ENCODE measurements at regions of chr3 and their contacts with region 1.

Region 1: GRCh38 chr3:52518720-52519444 is 14.8 kb downstream of the NT5DC2 start:
- DNase-seq: peak in 1 of 2 experiments; percentile 84
- H3K4me3 ChIP-seq: peak overlapping the region; percentile 31 to 60 (median 34)
- H3K27ac ChIP-seq: no peak overlapping the region
- H3K4me1 ChIP-seq: peaks cover 0 to 6% (median 4%) of the 10 kb centered on the region in 4 experiments; a peak in 5 of 7 replicates
- H3K27me3 ChIP-seq: peaks cover 0 to 11% (median 4%) of the 10 kb centered on the region in 4 experiments; a peak in 5 of 7 replicates
- CTCF ChIP-seq: no peak
- EP300 ChIP-seq: no peak
- POLR2A ChIP-seq: no peak
- RAD21 ChIP-seq: no peak

Region 2: GRCh38 chr3:52393131-52393807 is 125.6 kb before region 1 on chr3:
- CTCF ChIA-PET with region 1: no interaction called
- POLR2A ChIA-PET with region 1: no interaction called
- DNase-seq: no peak
- H3K4me3 ChIP-seq: no peak overlapping the region
- H3K27ac ChIP-seq: no peak overlapping the region
- H3K4me1 ChIP-seq: no peaks in the 10 kb centered on the region
- H3K27me3 ChIP-seq: no peaks in the 10 kb centered on the region
- CTCF ChIP-seq: no peak
- EP300 ChIP-seq: no peak
- POLR2A ChIP-seq: no peak
- RAD21 ChIP-seq: no peak

Region 3: DNA sequence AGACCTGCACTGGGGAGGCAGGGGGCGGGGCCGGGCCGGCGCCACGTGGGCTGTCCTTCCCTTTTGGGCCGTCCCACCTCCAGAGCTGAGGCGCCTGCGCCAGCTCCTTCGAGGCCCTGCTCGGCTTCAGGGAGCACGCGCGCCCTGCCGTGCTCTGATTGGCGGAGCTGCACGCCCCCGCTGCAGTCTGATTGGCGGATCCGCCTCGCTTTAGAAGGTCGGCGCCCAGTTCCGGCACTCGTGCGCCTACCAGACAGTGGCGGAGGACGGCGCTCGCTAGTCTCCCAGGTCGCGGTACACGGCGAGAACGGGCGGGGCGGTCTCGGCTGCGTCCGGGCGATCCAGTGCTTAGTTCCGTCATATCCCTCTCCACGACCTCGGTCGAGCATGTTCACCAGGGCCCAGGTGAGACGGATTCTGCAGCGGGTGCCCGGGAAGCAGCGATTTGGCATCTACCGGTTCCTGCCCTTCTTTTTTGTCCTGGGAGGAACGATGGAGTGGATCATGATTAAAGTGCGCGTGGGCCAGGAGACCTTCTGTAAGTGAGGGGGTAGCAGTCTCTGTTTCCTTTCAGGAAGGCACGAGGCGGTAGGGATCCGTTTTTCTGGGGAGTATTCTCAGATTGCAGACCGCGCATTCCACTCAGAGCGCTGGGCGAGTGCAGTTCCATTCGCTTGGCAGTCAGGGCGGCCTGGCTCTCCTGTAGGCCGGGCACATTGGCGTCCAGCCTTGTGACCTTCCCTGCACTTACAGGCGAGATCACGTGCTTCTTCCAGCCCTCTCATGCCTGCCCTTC is 17.7 kb after region 1 on chr3 and contains the start of gene UQCC5:
- CTCF ChIA-PET with region 1: interaction called, 4 read pairs
- POLR2A ChIA-PET with region 1: interaction called, 25 read pairs
- DNase-seq: peak; percentile 94 to 96
- H3K4me3 ChIP-seq: peak within 1 kb of the TSS; percentile 81 to 91 (median 88)
- H3K27ac ChIP-seq: peak within 1 kb of the TSS; percentile 77
- H3K4me1 ChIP-seq: peaks cover 7 to 33% (median 19%) of the 10 kb centered on the region in 4 experiments
- H3K27me3 ChIP-seq: no peaks in the 10 kb centered on the region
- CTCF ChIP-seq: no peak
- EP300 ChIP-seq: no peak
- POLR2A ChIP-seq: peak in 1 of 2 experiments; percentile 97; a peak in 2 of 3 replicates
- RAD21 ChIP-seq: peak in 1 of 2 experiments; percentile 11; a peak in 1 of 4 replicates
- total RNA-seq, gene UQCC5: 37.7 and 39.3 TPM in 2 replicates

Region 4: GRCh38 chr3:52547143-52547542 is 28.3 kb after region 1 on chr3:
- CTCF ChIA-PET with region 1: no interaction called
- POLR2A ChIA-PET with region 1: no interaction called
- DNase-seq: no peak
- H3K4me3 ChIP-seq: no peak overlapping the region
- H3K27ac ChIP-seq: no peak overlapping the region
- H3K4me1 ChIP-seq: no peaks in the 10 kb centered on the region
- H3K27me3 ChIP-seq: no peaks in the 10 kb centered on the region
- CTCF ChIP-seq: no peak
- EP300 ChIP-seq: no peak
- POLR2A ChIP-seq: no peak
- RAD21 ChIP-seq: no peak

Region 5: GRCh38 chr3:52561028-52561747 is 42.3 kb after region 1 on chr3:
- CTCF ChIA-PET with region 1: no interaction called
- POLR2A ChIA-PET with region 1: no interaction called
- DNase-seq: no peak
- H3K4me3 ChIP-seq: no peak overlapping the region
- H3K27ac ChIP-seq: no peak overlapping the region
- H3K4me1 ChIP-seq: no peaks in the 10 kb centered on the region
- H3K27me3 ChIP-seq: no peaks in the 10 kb centered on the region
- CTCF ChIP-seq: no peak
- EP300 ChIP-seq: no peak
- POLR2A ChIP-seq: no peak
- RAD21 ChIP-seq: no peak

Region 6: GRCh38 chr3:52820736-52821135 is 301.9 kb after region 1 on chr3:
- CTCF ChIA-PET with region 1: no interaction called
- POLR2A ChIA-PET with region 1: no interaction called
- DNase-seq: peak; percentile 41 to 84
- H3K4me3 ChIP-seq: no peak overlapping the region
- H3K27ac ChIP-seq: no peak overlapping the region
- H3K4me1 ChIP-seq: peaks cover 0 to 6% (median 3%) of the 10 kb centered on the region in 4 experiments; a peak in 2 of 7 replicates
- H3K27me3 ChIP-seq: no peaks in the 10 kb centered on the region
- CTCF ChIP-seq: peak in 2 of 3 experiments; percentile 90 to 98; a peak in 3 of 4 replicates
- EP300 ChIP-seq: no peak
- POLR2A ChIP-seq: no peak
- RAD21 ChIP-seq: peak; percentile 67 to 76